ENCODE measurements at regions of chr9 and their contacts with region 1.

Region 1: GRCh38 chr9:136790927-136791641 is at the start of gene TMEM141:
- DNase-seq: peak; percentile 99 to 100 (median 99)
- H3K4me3 ChIP-seq: peak within 1 kb of the TSS; percentile 61 to 86
- H3K4me3 Mint-ChIP-seq: peak within 1 kb of the TSS; percentile 81 to 88 (median 85)
- H3K27ac ChIP-seq: peak within 1 kb of the TSS; percentile 93
- H3K27ac Mint-ChIP-seq: peak within 1 kb of the TSS; percentile 91 to 98 (median 95)
- H3K4me1 ChIP-seq: peaks cover 31% of the 10 kb centered on the region
- H3K4me1 Mint-ChIP-seq: peaks cover 8 to 42% (median 24%) of the 10 kb centered on the region in 4 donors
- H3K27me3 ChIP-seq: no peaks in the 10 kb centered on the region
- H3K27me3 Mint-ChIP-seq: no peaks in the 10 kb centered on the region
- total RNA-seq, gene TMEM141: 51.1 to 53.4 TPM

Region 2: DNA sequence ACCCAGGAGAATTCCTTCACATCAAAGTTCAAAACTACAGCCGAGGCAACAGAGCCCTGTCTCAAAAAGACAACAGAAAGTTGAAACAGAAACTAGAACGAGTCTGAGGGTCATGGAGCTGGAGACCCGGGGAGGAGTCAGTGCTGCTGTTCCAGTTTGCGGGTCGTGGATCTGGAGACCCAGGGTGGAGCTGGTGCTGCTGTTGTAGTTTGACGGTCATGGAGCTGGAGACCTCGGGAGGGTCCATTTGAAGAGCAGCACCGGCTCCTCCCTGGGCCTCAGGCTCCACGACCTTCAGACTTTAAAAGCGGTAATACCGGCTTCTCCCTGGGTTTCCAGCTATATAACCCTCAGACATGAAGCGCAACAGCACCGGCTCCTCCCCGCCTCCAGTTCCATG is 13.7 kb before region 1 on chr9:
- CTCF ChIA-PET with region 1: interaction called, 16 read pairs
- POLR2A ChIA-PET with region 1: interaction called, 3 read pairs
- intact Hi-C with region 1: no loop called
- DNase-seq: no peak
- H3K4me3 ChIP-seq: no peak overlapping the region
- H3K4me3 Mint-ChIP-seq: no peak overlapping the region
- H3K27ac ChIP-seq: no peak overlapping the region
- H3K27ac Mint-ChIP-seq: no peak overlapping the region
- H3K4me1 ChIP-seq: no peaks in the 10 kb centered on the region
- H3K4me1 Mint-ChIP-seq: peaks cover 0 to 5% (median 0%) of the 10 kb centered on the region in 4 donors
- H3K27me3 ChIP-seq: no peaks in the 10 kb centered on the region
- H3K27me3 Mint-ChIP-seq: peaks cover 10 to 14% of the 10 kb centered on the region in 2 donors

Region 3: DNA sequence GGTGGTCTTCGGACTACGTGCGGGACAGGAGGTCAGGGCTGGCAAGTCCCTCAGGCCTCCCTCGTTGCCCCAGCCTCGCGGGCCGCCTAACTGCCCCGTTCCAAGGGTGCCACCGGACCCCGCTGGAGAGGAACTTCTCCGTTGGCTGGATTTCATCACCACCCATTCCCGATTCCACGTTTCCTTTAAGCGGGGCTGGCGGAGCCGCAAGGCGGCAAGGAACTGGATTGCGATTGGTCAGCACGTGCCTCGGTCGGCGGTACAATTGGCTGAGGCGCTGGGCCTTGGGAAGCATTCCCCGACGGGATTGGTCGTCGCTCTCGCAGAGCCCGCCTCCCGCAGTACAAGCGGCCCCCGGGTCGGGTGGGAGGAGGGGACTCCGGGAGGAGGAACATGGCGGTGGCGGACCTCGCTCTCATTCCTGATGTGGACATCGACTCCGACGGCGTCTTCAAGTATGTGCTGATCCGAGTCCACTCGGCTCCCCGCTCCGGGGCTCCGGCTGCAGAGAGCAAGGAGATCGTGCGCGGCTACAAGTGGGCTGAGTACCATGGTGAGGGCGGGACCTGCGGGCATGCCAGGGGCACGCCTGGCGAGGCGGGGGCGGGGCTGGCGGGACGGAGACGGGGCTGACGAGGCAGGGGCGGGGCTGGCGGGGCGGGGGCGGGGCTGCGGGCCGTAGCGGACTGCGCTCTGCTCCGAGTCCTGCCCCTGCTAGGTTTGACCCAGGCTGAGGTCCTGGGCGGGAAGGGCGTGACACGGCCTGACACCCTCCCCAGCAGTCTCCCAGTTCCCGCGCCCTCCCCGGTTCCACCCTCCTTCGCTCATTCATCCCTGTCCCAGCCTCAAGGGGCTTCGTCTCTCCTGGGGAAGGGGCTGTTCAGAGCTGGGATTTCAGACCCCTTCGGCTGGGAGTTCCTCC is 58.2 kb after region 1 on chr9 and contains the start of gene PHPT1:
- CTCF ChIA-PET with region 1: no interaction called
- POLR2A ChIA-PET with region 1: interaction called, 3 read pairs
- intact Hi-C with region 1: loop called (anchors 1 kb)
- DNase-seq: peak; percentile 96 to 99 (median 97)
- H3K4me3 ChIP-seq: peak within 1 kb of the TSS; percentile 54 to 85
- H3K4me3 Mint-ChIP-seq: peak within 1 kb of the TSS; percentile 89 to 94 (median 92)
- H3K27ac ChIP-seq: peak within 1 kb of the TSS; percentile 47
- H3K27ac Mint-ChIP-seq: peak within 1 kb of the TSS; percentile 77 to 96 (median 93)
- H3K4me1 ChIP-seq: peaks cover 26% of the 10 kb centered on the region
- H3K4me1 Mint-ChIP-seq: peaks cover 7 to 27% (median 12%) of the 10 kb centered on the region in 4 donors
- H3K27me3 ChIP-seq: no peaks in the 10 kb centered on the region
- H3K27me3 Mint-ChIP-seq: peaks cover 3 to 10% of the 10 kb centered on the region in 2 donors
- total RNA-seq, gene PHPT1: 41.3 to 42.6 TPM

Region 4: GRCh38 chr9:136978073-136978864 is 187.2 kb after region 1 on chr9:
- CTCF ChIA-PET with region 1: no interaction called
- POLR2A ChIA-PET with region 1: no interaction called
- intact Hi-C with region 1: loop called (anchors 1 kb)
- DNase-seq: peak; percentile 66 to 81 (median 69)
- H3K4me3 ChIP-seq: peak overlapping the region in 1 of 2 donors; percentile 9
- H3K4me3 Mint-ChIP-seq: peak overlapping the region in 5 of 8 donors; percentile 24 to 61 (median 47)
- H3K27ac ChIP-seq: peak overlapping the region; percentile 2
- H3K27ac Mint-ChIP-seq: no peak overlapping the region
- H3K4me1 ChIP-seq: peaks cover 41% of the 10 kb centered on the region
- H3K4me1 Mint-ChIP-seq: peaks cover 11 to 32% (median 23%) of the 10 kb centered on the region in 4 donors
- H3K27me3 ChIP-seq: no peaks in the 10 kb centered on the region
- H3K27me3 Mint-ChIP-seq: no peaks in the 10 kb centered on the region

Region 5: DNA sequence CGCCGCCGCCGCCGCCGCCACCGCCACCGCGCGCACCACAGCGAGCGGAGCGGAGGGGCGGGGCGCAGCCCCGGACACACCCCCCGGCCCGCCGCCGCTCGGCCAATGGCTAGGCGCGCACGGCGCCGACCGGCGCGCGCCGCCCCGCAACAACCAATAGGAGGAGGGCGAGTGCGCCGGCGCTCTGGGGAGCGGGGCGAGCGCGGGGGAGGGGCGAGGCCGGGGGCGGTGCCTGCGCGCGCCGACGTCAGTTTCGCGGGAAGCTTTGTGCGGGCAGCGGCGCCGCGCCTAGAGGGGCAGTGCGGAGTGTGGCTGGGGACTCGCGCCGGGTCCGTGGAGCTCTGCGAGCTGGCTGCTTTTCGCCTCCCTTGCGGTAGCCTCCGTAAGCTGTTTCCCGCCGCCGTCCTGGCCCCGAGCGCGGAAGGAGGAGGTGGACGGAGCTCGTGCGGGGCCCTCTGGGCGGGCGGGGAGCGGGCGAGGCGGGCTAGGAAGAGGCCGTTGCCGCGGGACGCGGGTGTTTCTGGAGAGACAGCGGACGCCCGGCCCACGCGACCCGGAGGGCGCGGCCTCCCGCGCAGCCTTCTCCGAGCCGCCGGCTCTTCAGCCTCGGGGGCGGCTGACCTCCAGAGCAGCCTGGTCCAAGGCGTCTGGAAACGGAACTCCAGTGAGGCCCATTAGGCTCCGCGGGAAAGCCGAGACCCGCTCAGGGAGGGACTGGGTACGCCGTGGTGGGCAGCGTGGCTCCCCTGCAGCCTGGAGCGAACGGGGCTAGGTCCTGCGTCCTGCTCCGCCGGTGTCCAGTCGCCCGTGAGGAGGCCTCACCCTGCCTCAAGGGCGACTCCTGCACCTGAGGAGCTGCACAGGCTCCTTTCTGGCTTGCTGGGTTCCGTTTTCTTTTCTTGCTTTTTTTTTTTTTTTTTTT is 799.6 kb after region 1 on chr9 and contains the start of gene ZMYND19:
- CTCF ChIA-PET with region 1: no interaction called
- POLR2A ChIA-PET with region 1: no interaction called
- intact Hi-C with region 1: loop called (anchors 2 kb)
- DNase-seq: peak; percentile 85 to 93 (median 91)
- H3K4me3 ChIP-seq: peak within 1 kb of the TSS; percentile 23 to 52
- H3K4me3 Mint-ChIP-seq: peak within 1 kb of the TSS; percentile 92 to 100 (median 96)
- H3K27ac ChIP-seq: peak within 1 kb of the TSS; percentile 60
- H3K27ac Mint-ChIP-seq: peak within 1 kb of the TSS; percentile 89 to 97 (median 95)
- H3K4me1 ChIP-seq: peaks cover 21% of the 10 kb centered on the region
- H3K4me1 Mint-ChIP-seq: peaks cover 5 to 24% (median 15%) of the 10 kb centered on the region in 4 donors
- H3K27me3 ChIP-seq: no peaks in the 10 kb centered on the region
- H3K27me3 Mint-ChIP-seq: no peaks in the 10 kb centered on the region
- total RNA-seq, gene ZMYND19: 26.8 to 29.1 TPM

Measured in CD4-positive, alpha-beta memory T cell (primary cell).